ENCODE measurements at regions of chr1 and their contacts with region 1.

Region 1: GRCh38 chr1:151198255-151199127 is at the start of gene PIP5K1A:
- DNase-seq: peak; percentile 99 to 100
- ATAC-seq: peak; percentile 95 to 97 (median 96)
- H3K4me3 ChIP-seq: peak within 1 kb of the TSS; percentile 77 to 92 (median 82)
- H3K27ac ChIP-seq: peak within 1 kb of the TSS; percentile 38 to 96 (median 92)
- H3K4me1 ChIP-seq: peaks cover 10 to 56% (median 41%) of the 10 kb centered on the region in 9 donors
- H3K27me3 ChIP-seq: no peaks in the 10 kb centered on the region
- CTCF ChIP-seq: no peak
- total RNA-seq, gene PIP5K1A: 32.4 to 48.0 (median 39.2) TPM

Region 2: GRCh38 chr1:151243683-151244216 is 45.3 kb after region 1 on chr1:
- intact Hi-C with region 1: loop called in 1 of 10 experiments (anchors 5 kb)
- DNase-seq: no peak
- ATAC-seq: no peak
- H3K4me3 ChIP-seq: no peak overlapping the region
- H3K27ac ChIP-seq: no peak overlapping the region
- H3K4me1 ChIP-seq: no peaks in the 10 kb centered on the region
- H3K27me3 ChIP-seq: no peaks in the 10 kb centered on the region
- CTCF ChIP-seq: no peak

Region 3: DNA sequence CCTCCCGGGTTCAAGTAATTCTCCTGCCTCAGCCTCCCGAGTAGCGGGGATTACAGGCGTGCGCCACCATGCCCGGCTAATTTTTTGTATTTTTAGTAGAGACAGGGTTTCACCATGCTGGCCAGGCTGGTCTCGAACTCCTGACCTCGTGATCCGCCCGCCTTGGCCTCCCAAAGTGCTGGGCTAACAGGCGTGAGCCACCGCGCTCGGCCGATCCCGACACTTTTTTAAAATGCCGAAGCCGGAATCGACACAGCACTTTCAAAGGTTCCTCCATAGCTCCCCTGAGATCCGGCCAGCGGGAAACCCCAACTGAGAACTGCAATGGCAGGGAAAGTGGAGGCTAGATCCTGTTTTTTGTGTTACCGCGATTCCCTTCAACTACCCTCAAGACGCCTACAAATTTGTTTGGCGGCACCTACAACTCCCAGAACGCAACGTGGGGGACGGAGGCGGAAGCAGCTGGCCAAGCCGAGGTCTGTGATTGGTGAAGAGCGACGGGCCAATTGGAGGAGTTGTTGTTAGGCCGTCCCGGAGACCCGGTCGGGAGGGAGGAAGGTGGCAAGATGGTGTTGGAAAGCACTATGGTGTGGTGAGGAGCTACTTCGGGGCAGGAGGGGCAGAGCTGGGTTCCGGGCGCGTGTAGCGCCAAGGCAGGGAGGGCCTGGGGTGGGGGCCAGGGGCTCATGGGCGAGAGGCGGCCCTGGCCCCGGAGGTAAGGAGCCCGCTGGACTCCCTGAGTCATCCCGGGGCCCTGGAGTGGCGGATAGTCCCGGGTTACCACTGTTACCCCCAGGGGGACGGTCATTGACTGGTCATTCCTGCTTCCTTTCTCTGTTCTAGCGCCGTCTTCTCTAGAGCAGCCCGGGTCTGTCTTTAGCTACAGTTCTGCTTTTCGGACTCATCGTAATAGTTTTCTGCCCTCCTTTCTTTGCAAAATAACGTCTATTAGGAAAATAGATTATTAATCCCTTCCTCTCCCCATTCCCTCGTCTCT is 56.0 kb after region 1 on chr1 and contains the start of gene PSMD4:
- intact Hi-C with region 1: loop called (anchors 1 to 5 kb)
- DNase-seq: peak; percentile 92 to 96
- ATAC-seq: peak; percentile 97 to 99 (median 99)
- H3K4me3 ChIP-seq: peak within 1 kb of the TSS; percentile 71 to 98 (median 92)
- H3K27ac ChIP-seq: peak within 1 kb of the TSS; percentile 37 to 98 (median 90)
- H3K4me1 ChIP-seq: peaks cover 4 to 31% (median 16%) of the 10 kb centered on the region in 9 donors
- H3K27me3 ChIP-seq: no peaks in the 10 kb centered on the region
- CTCF ChIP-seq: peak in 1 of 9 donors; percentile 17
- total RNA-seq, gene PSMD4: 119 to 157 (median 147) TPM

Region 4: GRCh38 chr1:151281969-151282882 is 83.7 kb after region 1 on chr1 and contains the start of gene ZNF687:
- intact Hi-C with region 1: loop called in 1 of 10 experiments (anchors 1 kb)
- DNase-seq: peak; percentile 100
- ATAC-seq: peak; percentile 90 to 96 (median 94)
- H3K4me3 ChIP-seq: peak within 1 kb of the TSS; percentile 73 to 96 (median 86)
- H3K27ac ChIP-seq: peak within 1 kb of the TSS; percentile 94 to 99 (median 97)
- H3K4me1 ChIP-seq: peaks cover 0 to 36% (median 20%) of the 10 kb centered on the region in 9 donors
- H3K27me3 ChIP-seq: no peaks in the 10 kb centered on the region
- CTCF ChIP-seq: peak in 1 of 9 donors; percentile 13
- total RNA-seq, gene ZNF687: 10.4 to 15.1 (median 13.1) TPM

Region 5: DNA sequence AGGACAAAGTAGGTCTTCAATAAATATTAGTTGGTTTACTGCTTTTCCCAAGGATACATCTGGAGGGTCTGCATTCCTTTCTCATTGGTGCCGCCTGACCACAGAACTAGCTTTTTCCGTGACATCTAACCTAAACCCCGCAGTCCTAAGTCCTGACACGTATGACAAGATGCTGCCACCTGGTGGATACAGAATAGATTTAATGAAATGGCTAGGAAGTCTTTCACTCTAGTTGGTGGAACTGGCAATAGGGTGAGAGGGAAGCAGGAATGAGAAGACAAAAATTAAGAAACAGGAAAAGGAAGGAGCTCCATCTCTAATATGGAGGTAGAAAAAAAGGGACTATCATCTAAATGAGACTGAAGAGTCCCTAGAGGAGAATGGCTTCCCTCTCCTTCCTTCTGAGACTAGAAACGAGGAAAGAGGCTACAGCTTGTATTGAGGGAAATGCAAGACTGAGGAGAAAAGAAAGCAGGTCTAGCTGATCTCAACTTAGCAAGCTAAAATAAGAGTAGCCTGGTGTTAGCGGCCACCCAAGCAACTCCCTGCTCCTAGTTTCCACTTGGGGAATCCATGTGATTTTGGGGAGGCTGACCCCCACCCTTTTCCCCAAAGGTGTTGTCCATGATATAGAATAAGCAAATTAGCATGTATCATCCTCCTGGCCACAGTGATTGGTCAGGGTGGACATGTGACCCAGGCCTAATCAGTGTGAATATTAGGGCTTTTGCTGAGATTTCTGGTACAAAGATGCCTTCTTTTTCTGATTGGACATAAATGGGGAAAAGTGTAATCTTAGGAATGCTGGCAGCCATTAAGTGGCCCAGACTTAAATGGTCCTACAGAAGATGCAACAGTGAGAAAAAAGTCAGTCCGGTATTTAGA is 142.6 kb after region 1 on chr1:
- intact Hi-C with region 1: loop called in 6 of 10 experiments (anchors 5 to 10 kb)
- DNase-seq: peak in 1 of 2 donors; percentile 64
- ATAC-seq: peak; percentile 79 to 93 (median 88)
- H3K4me3 ChIP-seq: no peak overlapping the region
- H3K27ac ChIP-seq: peak overlapping the region in 2 of 10 donors; percentile 9 to 29
- H3K4me1 ChIP-seq: peaks cover 0 to 26% (median 7%) of the 10 kb centered on the region in 9 donors
- H3K27me3 ChIP-seq: no peaks in the 10 kb centered on the region
- CTCF ChIP-seq: peak; percentile 47 to 80 (median 75)

Region 6: DNA sequence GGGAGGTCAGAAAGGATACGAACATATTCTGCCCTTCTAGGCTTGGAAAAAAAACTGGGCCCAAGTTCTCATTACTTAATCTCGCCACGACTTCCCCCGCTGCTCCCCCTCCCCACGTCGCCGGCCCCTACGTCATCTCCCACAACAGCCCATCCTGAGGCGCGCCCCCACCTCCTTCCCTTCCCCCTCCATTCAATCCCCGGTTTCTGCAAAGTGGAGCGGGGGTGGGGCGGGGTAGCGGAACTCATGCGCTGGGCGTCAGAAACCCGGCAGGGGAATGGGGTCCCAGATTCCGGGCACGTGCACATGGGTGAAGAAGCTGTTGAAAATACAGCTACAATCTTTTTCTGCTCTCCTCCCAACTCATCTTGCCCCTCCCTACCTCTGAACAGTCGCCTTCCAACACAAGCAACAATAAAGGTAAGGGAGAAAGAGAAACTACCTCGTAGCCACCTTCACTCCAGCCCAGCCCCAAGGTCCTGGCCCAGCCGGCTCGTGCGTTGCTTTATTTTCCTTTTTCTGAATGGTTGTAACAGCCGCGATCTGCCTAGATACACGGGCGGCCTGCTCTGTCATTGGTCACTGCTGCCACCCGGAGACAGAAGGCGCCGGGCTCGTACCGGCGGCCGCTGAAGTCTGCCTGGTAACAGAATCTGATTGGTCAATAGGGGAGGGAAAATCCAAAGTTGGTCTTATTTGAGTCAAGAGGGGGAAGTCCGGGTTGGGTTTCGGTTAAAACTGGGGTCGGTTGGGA is 148.5 kb after region 1 on chr1 and contains the start of gene RFX5:
- intact Hi-C with region 1: loop called in 6 of 10 experiments (anchors 5 to 10 kb)
- DNase-seq: peak; percentile 89 to 95
- ATAC-seq: peak; percentile 96 to 99 (median 98)
- H3K4me3 ChIP-seq: peak within 1 kb of the TSS; percentile 56 to 82 (median 68)
- H3K27ac ChIP-seq: peak within 1 kb of the TSS; percentile 16 to 95 (median 89)
- H3K4me1 ChIP-seq: peaks cover 0 to 25% (median 13%) of the 10 kb centered on the region in 9 donors
- H3K27me3 ChIP-seq: no peaks in the 10 kb centered on the region
- CTCF ChIP-seq: no peak
- total RNA-seq, gene RFX5: 12.6 to 38.4 (median 24.0) TPM

Region 7: DNA sequence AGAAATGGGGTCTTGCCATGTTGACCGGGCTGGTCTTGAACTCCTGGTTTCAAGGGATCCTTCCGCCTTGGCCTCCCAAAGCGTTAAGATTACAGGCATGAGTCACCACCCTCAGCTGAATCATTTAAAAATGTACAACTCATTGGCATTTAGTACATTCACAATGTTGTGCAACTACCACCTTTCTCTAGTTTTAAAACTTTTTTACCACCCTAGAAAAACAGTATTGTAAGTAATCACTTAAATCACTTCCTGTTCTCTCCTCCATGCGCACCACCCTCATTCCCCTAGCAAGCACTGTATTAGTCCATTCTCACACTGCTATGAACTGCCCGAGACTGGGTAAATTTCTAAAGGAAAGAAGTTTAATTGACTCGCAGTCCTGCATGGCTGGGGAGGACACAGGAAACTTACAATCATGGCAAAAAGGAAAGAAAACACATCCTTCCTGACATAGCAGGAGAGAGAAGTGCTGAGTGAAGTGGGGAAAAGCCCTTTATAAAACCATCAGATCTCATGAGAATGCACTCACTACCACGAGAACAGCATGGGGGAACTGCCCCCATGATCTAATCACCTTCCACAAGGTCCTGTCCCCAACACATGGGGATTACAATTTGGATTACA is 669.4 kb after region 1 on chr1:
- intact Hi-C with region 1: no loop called
- DNase-seq: no peak
- ATAC-seq: peak in 1 of 8 donors; percentile 50
- H3K4me3 ChIP-seq: no peak overlapping the region
- H3K27ac ChIP-seq: peak overlapping the region in 1 of 10 donors; percentile 11
- H3K4me1 ChIP-seq: peaks cover 0 to 12% (median 0%) of the 10 kb centered on the region in 9 donors
- H3K27me3 ChIP-seq: no peaks in the 10 kb centered on the region
- CTCF ChIP-seq: no peak

Measured in heart right ventricle (tissue), 16 donors.